ENCODE measurements at regions of chr17 and their contacts with region 1.

Region 1: GRCh38 chr17:40168262-40168832 is 8.9 kb upstream of the RAPGEFL1 start:
- DNase-seq: peak; percentile 52
- H3K4me3 Mint-ChIP-seq: no peak overlapping the region
- H3K27ac Mint-ChIP-seq: peak overlapping the region; percentile 43
- H3K4me1 Mint-ChIP-seq: peaks cover 4% of the 10 kb centered on the region
- H3K27me3 Mint-ChIP-seq: no peaks in the 10 kb centered on the region

Region 2: DNA sequence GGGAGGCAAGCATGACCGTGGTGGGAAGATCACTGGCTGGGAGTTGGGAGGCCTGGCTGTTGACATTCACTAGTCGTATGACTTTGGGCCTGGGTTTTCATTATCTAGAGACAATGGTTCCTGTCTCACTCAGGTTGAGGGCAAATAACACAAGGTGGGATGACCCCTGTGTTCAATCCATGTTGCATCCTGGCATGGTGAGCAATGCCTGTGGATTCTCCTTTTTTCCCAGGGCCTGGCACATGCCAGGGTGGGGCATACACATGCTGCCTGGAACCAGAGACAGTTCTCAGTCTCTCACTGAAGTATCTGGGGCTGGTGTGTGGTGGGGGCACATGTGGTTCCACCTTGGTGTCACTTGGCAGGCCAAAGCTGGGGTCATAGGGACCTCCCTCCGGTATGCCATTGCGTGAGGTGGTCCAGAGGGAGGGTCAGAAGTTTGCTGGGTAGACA is 100.2 kb before region 1 on chr17:
- CTCF ChIA-PET with region 1: no interaction called
- DNase-seq: no peak
- H3K4me3 Mint-ChIP-seq: peak overlapping the region; percentile 63
- H3K27ac Mint-ChIP-seq: peak overlapping the region; percentile 81
- H3K4me1 Mint-ChIP-seq: peaks cover 54% of the 10 kb centered on the region
- H3K27me3 Mint-ChIP-seq: peaks cover 26% of the 10 kb centered on the region

Region 3: DNA sequence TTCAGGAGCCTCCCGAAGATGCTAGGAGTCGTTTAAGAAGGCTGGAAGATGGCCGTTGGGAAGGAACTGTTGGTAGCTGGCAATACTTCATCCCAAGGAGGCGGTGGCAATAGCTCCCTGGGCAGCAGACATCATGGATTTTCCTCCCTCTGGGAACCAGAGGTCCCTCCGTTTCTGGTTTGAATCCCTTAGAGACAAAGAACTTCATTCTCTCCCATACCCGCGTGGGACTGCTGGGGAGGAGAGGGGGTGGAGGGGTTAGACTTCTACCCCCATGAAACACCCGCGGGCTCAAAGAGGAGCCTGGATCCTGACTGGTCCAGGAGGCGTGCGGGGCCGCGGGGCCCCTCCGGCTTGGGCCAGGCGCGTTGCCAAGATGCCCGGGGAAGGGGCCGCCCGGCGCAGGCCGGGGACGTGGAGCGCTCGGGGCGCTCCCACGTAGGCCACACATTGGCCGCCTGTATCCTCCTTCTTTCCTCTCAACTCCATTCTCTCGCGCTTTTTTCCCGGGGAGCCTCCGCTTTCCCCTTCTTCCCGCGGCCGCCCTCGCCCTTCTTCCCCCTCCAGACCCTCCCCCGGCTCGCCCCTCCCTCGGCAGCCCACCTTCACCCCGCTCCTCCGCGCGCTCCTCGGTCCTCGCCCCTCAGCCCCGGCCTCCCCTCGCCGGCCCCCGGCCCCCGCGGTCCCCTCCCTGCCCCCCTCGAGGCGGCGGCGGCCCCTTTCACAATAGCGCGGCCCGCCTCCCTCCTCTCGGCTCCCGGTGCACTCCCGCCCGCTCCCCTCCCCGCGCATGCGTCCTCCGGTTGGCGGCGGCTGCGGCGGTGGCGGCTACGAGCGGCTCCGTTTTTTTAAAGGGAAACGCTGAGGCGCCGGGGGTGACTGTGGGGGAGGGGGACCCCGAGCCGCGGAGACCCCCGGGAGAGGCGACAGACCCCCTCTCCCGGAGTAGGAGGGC is 46.9 kb before region 1 on chr17 and contains the start of gene MSL1:
- CTCF ChIA-PET with region 1: interaction called, 14 read pairs
- DNase-seq: peak; percentile 89
- H3K4me3 Mint-ChIP-seq: peak within 1 kb of the TSS; percentile 83
- H3K27ac Mint-ChIP-seq: peak within 1 kb of the TSS; percentile 82
- H3K4me1 Mint-ChIP-seq: peaks cover 37% of the 10 kb centered on the region
- H3K27me3 Mint-ChIP-seq: peaks cover 3% of the 10 kb centered on the region

Region 4: DNA sequence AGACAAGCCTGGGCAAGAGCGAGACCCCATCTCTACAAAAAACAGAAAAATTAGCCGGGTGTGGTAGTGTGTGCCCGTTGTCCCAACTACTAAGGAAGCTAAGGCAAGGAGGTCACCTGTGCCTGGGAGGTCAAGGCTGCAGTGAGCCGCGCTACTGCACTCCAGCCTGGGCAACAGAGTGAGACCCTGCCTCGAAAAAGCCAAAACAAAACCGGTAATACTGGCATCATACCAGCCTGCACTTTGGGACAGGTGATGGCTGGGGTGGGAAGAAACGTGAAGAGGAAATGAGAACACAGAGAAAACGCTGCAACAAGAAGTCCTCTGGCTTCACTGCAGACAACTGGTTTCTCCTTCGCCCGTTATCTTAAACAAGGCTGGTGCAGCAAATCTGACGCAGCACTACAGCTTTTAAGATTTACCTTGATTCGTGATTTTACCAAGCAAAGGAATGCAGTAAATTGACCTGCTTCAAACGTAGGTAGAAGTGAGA is 28.7 kb before region 1 on chr17:
- CTCF ChIA-PET with region 1: interaction called, 11 read pairs
- DNase-seq: no peak
- H3K4me3 Mint-ChIP-seq: peak overlapping the region; percentile 94
- H3K27ac Mint-ChIP-seq: peak overlapping the region; percentile 96
- H3K4me1 Mint-ChIP-seq: peaks cover 35% of the 10 kb centered on the region
- H3K27me3 Mint-ChIP-seq: no peaks in the 10 kb centered on the region

Region 5: DNA sequence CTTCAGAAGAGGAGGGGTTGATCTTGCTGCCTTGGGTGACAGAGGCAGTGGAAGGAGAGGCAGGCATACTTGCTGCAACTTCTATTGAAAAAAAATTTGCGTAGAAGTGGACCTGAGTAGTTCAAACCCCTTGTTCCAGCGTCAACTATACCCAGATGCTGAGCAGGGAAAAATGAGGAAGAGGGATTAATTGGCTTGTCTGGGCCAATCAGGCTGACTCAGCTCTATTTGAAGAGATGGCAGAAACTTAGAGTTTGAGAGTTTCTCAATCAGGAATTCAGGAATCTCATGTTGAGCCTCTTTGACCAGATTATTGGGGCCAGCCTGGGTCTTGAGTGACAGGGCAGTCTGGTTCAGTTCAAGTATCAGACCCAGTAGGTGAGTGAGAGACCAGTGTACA is 10.4 kb before region 1 on chr17:
- CTCF ChIA-PET with region 1: interaction called, 11 read pairs
- DNase-seq: no peak
- H3K4me3 Mint-ChIP-seq: no peak overlapping the region
- H3K27ac Mint-ChIP-seq: no peak overlapping the region
- H3K4me1 Mint-ChIP-seq: peaks cover 5% of the 10 kb centered on the region
- H3K27me3 Mint-ChIP-seq: no peaks in the 10 kb centered on the region

Region 6: GRCh38 chr17:40209404-40210093 is 41.2 kb after region 1 on chr17:
- CTCF ChIA-PET with region 1: no interaction called
- DNase-seq: no peak
- H3K4me3 Mint-ChIP-seq: no peak overlapping the region
- H3K27ac Mint-ChIP-seq: no peak overlapping the region
- H3K4me1 Mint-ChIP-seq: no peaks in the 10 kb centered on the region
- H3K27me3 Mint-ChIP-seq: peaks cover 10% of the 10 kb centered on the region

Region 7: DNA sequence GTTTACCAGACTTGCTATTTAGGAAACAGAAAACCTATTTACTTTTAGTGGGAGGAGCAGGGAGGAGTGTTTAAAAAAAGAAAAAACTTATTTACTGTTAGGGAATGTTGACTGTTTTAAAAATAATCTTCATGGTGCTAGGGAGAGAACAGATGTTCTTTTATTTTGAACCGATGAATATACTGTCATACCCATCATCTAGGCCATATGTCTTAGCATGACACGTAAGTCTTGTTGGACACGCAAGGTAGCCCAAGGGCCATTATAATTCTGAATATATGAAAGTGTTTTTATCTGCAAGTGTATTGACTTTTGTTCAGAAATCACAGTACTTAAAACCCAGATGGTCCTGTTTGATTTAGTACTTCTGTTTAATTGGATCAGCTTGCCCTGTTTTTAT is 62.3 kb after region 1 on chr17:
- CTCF ChIA-PET with region 1: no interaction called
- DNase-seq: no peak
- H3K4me3 Mint-ChIP-seq: no peak overlapping the region
- H3K27ac Mint-ChIP-seq: no peak overlapping the region
- H3K4me1 Mint-ChIP-seq: peaks cover 4% of the 10 kb centered on the region
- H3K27me3 Mint-ChIP-seq: no peaks in the 10 kb centered on the region

Measured in activated naive CD4-positive, alpha-beta T cell treated with anti-CD3 and anti-CD28 coated beads, Interleukin-2, amount 10 ng/mL, durations not matched to agents 7 days and 5 days (primary cell).